ENCODE measurements at regions of chr2 and their contacts with region 1.

Region 1: GRCh38 chr2:20490260-20491181 is 43.6 kb downstream of the RHOB start:
- DNase-seq: peak; percentile 38
- H3K4me3 ChIP-seq: no peak overlapping the region
- H3K27ac ChIP-seq: peak overlapping the region; percentile 41 to 70 (median 60)
- H3K4me1 ChIP-seq: peaks cover 0 to 20% (median 5%) of the 10 kb centered on the region in 4 donors
- H3K27me3 ChIP-seq: no peaks in the 10 kb centered on the region
- CTCF ChIP-seq: no peak
- EP300 ChIP-seq: peak; percentile 93
- POLR2A ChIP-seq: no peak

Region 2: DNA sequence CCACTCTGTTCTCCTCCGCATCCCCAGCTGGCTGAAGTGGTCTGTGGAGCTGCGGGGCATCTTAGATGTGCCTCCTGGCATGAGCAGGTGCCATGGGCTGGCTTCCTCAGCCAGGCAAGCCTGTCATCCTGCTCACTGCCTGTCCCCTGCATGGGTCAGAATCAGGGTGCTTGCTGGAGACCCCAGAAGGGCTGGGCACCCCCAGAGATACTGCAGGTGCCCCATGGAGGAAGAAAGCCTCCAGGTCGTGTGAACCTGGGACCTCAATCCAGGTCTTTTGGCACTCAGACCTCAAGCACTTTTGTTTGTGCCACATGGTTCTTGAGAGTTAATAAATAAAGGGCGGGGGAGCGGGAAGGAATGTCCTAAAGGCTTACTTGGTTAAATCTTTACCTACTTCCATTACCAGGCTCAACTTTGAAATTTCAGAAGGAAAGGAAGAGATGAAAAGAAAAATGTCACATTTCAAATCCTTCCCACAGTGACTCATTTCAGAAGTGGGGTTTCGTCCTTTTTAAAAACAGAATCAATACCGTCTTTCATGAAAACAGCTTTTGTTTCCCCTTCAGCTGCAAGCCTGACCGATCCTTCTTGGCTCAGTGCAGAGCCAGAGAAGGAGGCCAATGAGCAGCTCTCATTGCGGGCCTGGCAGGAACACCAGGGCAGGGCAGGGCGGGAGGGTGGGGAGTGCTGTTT is 26.3 kb after region 1 on chr2:
- in situ Hi-C with region 1: no loop called
- intact Hi-C with region 1: loop called (anchors 1 kb)
- DNase-seq: no peak
- H3K4me3 ChIP-seq: no peak overlapping the region
- H3K27ac ChIP-seq: peak overlapping the region in 3 of 4 donors; percentile 21 to 37 (median 34)
- H3K4me1 ChIP-seq: peaks cover 0 to 11% (median 0%) of the 10 kb centered on the region in 4 donors
- H3K27me3 ChIP-seq: no peaks in the 10 kb centered on the region
- CTCF ChIP-seq: no peak
- EP300 ChIP-seq: no peak
- POLR2A ChIP-seq: no peak